Activated T-helper 1 cell treated with anti-CD3 and anti-CD28 coated beads, Interleukin-12 subunit alpha, Interleukin-12 subunit beta, Interleukin-2, Interleukin-4 antibody, amounts not matched to agents 30 ng/mL and 10 ng/mL and 1 ng/mL, durations not matched to agents 14 hours and 24 hours and 36 hours (primary cell): ENCODE measurements at regions of chr5 and their contacts with region 1.

Region 1: DNA sequence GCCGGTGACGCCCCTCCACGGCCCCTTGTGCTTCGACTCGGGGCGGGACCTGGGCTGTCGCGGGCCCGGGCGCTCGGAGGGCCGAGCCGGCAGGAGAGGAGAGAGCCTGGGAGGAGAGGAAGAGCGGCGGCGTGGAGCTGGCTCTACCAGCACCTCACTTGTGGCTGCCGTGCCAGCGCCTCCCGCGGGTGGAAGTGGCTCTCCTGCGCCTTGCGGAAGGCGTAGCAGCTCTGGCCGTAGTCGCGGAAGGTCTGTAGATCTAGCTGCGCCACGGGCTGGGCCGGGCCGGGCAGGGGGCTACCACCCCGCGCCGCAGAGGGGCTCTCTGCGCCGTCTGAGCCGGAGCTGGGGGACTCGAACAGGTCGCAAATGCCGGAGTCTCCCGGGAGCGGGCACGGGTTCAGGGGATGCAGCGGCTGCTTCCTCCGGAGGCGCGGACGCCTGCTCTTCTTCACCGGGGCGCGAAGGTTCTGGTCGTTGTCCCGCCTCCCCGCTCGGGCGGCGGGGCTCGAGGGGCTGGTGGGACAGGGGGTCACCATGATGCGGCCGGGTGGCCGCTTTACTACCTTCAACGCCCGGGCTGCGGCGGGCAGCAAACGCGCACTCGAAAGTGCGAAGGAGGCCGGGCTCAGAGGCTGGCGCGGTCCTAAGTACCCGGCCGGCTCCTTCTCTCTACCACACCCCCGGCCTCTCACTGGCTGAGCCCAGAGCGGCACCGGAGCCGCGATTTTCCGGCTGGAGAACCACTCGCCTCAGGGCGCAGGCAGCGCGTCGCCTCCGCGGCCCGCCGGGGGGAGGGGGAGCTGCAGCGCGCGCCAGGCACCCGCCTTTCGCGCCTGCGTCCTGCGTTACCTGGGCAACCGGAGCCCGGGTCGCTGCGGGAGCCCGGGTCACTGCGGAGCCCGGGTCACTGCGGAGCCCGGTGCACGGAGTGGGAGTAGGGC is at the start of gene CCNO:
- DNase-seq: peak; percentile 58
- H3K4me3 Mint-ChIP-seq: peak within 1 kb of the TSS; percentile 83
- H3K27ac Mint-ChIP-seq: peak within 1 kb of the TSS; percentile 61
- H3K4me1 Mint-ChIP-seq: peaks cover 42% of the 10 kb centered on the region
- H3K27me3 Mint-ChIP-seq: peaks cover 80% of the 10 kb centered on the region
- total RNA-seq, gene CCNO: 0.10 and 0.20 TPM in 2 replicates

Region 2: GRCh38 chr5:55220391-55221185 is 12.7 kb before region 1 on chr5:
- intact Hi-C with region 1: loop called (anchors 1 kb)
- DNase-seq: no peak
- H3K4me3 Mint-ChIP-seq: peak overlapping the region; percentile 62
- H3K27ac Mint-ChIP-seq: peak overlapping the region; percentile 23
- H3K4me1 Mint-ChIP-seq: peaks cover 39% of the 10 kb centered on the region
- H3K27me3 Mint-ChIP-seq: peaks cover 80% of the 10 kb centered on the region

Region 3: DNA sequence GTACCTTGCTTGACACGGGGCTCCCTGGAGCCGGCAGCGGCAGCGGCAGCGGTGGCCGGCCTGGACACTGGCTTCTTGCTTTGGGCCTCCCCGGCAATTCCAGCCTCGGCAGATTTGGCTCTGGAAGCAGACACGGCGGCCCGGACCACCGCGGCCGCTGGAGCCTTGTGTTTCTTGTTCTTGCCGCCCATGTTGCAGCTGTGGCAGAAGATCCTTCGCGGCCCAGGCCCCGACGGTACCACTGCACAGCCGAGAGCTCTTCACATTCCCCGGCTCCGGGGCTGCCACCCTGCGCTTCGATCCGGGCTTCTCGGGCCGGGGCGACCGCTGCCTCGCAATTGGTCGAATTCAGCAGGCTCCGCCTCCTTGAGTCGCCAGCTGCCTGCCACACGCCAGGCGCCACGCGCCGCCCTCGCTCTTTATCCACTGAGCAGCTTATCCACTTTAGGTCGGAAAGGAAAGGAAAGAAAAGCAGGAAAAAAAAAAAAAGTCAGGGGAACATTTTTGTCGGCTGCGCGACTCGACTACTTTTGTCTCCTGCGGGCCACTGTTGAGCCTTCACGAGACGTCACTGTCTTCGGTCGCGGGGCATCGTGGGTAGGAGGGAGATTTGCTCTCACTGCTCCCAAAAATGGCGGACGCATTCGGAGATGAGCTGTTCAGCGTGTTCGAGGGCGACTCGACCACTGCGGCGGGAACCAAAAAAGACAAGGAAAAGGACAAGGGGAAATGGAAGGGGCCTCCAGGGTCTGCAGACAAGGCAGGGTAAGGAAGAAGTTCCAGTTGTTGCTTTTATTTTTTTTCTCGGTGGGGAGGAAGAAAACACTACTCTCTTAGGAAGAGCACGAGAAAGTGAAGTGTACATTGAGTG is 74.4 kb after region 1 on chr5 and contains the starts of genes DHX29 and MTREX:
- intact Hi-C with region 1: loop called (anchors 2 kb)
- DNase-seq: peak; percentile 89
- H3K4me3 Mint-ChIP-seq: no peak within 1 kb of the TSS
- H3K27ac Mint-ChIP-seq: no peak within 1 kb of the TSS
- H3K4me1 Mint-ChIP-seq: peaks cover 19% of the 10 kb centered on the region
- H3K27me3 Mint-ChIP-seq: no peaks in the 10 kb centered on the region
- total RNA-seq, gene DHX29: 20.3 and 22.3 TPM in 2 replicates
- total RNA-seq, gene MTREX: 110 and 122 TPM in 2 replicates